GM10248 (cell line): ENCODE measurements at regions of chr7 and their contacts with region 1.

Region 1: GRCh38 chr7:76020031-76020714 is 25.8 kb upstream of the TMEM120A start:
- DNase-seq: peak; percentile 79
- CTCF ChIP-seq: peak; percentile 82

Region 2: DNA sequence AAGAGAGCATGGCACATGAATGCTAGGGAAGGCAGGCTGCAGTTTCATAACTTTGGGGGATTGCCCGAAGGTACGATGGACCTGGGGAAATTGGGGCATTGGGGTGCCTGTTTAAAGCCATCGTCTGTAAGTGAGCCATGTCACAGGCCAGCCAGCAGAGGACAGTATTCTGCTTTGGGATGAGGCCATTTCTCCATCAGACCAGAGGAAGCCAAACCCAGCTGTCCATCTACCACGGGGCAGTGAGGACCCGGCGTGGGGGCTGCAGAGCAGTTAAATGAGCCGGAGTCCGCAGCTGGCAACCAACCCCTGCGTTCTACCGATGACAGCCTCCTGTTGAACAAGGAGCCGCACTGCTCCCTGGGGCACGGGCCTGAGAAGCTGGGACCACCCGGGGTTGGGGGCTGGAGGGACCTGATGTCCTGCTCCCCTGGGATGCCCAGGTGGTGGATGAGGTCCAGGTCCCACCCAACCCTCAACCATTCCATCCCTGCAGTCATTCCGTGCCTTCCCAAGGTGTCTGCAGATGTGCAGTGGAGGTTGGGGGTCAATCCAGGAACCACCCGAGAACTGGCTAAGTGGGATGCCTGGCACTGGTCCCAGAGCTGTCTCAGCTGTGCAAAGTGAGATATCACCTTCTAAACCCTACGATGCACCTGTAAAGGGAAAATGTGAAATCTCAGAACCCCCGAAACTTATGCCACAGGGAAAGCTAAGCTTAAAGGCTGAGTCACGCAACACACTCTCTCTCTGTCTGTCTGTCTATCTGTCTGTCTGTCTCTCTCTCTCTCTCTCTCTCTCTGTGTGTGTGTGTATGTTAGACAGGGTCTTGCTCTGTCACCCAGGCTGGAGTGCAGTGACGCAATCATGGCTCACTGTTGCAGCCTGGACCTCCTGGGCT is 153.4 kb before region 1 on chr7:
- CTCF ChIA-PET with region 1: interaction called, 193 read pairs
- POLR2A ChIA-PET with region 1: no interaction called
- DNase-seq: peak; percentile 84
- CTCF ChIP-seq: peak; percentile 95

Region 3: GRCh38 chr7:75914730-75915585 is 105.2 kb before region 1 on chr7 and contains the start of gene POR:
- CTCF ChIA-PET with region 1: interaction called, 17 read pairs
- POLR2A ChIA-PET with region 1: no interaction called
- DNase-seq: peak; percentile 97
- CTCF ChIP-seq: no peak

Region 4: GRCh38 chr7:75966190-75966961 is 53.8 kb before region 1 on chr7:
- CTCF ChIA-PET with region 1: interaction called, 17 read pairs
- POLR2A ChIA-PET with region 1: no interaction called
- DNase-seq: no peak
- CTCF ChIP-seq: no peak

Region 5: GRCh38 chr7:76031964-76032363 is 11.8 kb after region 1 on chr7:
- CTCF ChIA-PET with region 1: interaction called, 48 read pairs
- POLR2A ChIA-PET with region 1: interaction called, 3 read pairs
- DNase-seq: no peak
- CTCF ChIP-seq: no peak

Region 6: DNA sequence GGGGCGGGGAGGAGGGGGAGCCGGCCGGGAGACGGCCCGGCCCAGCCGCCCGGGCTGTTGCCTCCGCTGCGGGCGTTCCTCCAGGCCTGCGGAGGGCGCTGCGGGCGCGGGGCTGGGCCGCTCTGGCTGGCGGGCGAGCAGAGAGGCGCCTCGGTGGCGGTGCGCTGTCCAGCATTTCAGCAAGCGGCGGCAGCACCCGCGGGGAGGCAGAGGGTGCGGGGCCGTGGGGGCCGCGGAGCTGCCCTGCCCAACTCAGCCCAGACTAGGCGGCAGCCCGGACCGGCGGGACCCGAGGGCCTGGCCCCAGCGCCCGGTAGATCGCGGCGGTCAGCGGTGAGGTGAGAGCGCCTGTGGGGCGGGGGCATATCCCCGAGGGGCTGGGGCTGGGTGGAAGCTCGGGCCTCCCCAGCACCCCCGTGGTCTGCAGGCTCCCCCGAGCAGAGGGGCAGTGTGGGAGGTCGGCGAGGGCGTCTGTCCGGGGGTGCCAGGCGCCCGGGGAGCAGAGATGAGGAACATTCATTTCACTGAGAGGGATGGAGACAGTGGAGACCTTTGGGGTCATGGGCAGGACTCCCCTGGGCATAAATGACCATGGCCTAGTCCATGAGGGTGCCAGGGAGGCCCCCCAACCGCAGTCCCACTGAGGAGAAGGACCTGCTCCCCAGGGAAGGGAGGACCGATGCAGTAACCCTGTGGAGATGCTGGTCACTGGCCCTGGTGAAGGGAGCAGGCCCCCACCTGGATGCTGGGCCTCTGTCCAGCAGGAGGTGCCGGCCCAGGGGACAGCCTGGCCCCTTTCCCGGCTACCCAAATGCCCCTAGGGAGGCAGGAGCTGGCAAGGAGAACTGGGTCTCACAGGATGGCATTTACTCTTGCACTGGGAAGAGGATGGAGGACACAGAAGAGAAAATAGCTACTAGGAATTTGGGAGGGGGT is 181.8 kb after region 1 on chr7 and contains the start of gene SRRM3:
- CTCF ChIA-PET with region 1: no interaction called
- POLR2A ChIA-PET with region 1: no interaction called
- DNase-seq: peak; percentile 89
- CTCF ChIP-seq: peak; percentile 97

Region 7: GRCh38 chr7:76291343-76292212 is 271.4 kb after region 1 on chr7:
- CTCF ChIA-PET with region 1: no interaction called
- POLR2A ChIA-PET with region 1: no interaction called
- DNase-seq: peak; percentile 92
- CTCF ChIP-seq: peak; percentile 98